Right ventricle myocardium inferior (tissue), 1 donor: ENCODE measurements at regions of chr1 and their contacts with region 1.

Region 1: GRCh38 chr1:227886993-227887696 is 60.6 kb downstream of the WNT9A start:
- DNase-seq: peak; percentile 87
- ATAC-seq: peak; percentile 86

Region 2: DNA sequence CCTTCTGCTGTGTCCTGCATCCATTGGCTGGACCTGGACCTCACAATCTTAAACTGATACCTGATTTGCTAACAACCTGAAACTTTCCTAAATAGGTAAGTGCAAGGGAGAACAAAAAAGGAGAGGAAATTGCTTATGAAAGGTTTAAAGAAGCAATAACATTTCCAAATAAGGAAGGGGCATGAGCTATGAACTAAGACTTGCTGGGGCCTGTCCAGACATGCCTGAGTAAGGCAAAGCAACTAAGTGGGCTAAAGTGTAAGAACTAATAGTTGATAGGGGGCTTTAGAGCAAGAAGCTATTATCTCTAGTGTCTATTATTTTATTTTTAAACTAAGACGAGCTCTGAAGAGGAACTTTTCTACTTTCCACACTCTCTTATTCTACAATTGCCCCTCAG is 163.7 kb before region 1 on chr1:
- intact Hi-C with region 1: no loop called
- DNase-seq: no peak
- ATAC-seq: no peak

Region 3: GRCh38 chr1:227787513-227788270 is 99.5 kb before region 1 on chr1:
- intact Hi-C with region 1: loop called (anchors 10 kb)
- DNase-seq: peak; percentile 96
- ATAC-seq: peak; percentile 97